Heart right ventricle (tissue), 16 donors: ENCODE measurements at regions of chr2 and their contacts with region 1.

Region 1: DNA sequence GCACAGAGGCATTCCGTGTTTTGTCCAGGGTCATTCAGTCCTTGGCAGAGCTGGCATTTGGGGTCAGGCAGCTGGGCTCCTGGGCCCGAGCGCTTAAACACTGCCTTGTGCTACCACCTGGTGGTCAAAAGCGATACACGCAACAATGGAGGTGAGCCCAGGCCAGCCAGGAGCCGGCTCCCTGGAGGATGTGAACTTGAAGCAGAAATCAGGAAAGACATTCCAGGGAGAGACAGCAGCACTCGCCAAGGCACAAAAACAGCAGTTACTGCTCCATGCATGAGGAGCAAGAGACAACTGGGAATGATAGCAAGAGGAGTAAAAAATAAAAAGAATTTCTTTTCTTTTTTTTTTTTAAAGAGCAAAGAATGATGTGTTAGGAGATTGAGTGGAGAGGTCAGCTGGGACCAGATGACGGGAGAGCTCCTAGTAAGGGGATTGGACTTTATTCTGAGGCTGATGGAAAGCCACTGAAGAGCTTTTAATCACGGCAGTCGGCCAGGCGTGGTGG is 20.7 kb downstream of the SCYGR8 start:
- DNase-seq: peak; percentile 70 to 76
- ATAC-seq: peak; percentile 90 to 99 (median 96)
- H3K4me3 ChIP-seq: no peak overlapping the region
- H3K27ac ChIP-seq: peak overlapping the region in 6 of 10 donors; percentile 3 to 41 (median 22)
- H3K4me1 ChIP-seq: peaks cover 0 to 8% (median 5%) of the 10 kb centered on the region in 9 donors
- H3K27me3 ChIP-seq: no peaks in the 10 kb centered on the region
- CTCF ChIP-seq: peak; percentile 69 to 93 (median 87)

Region 2: GRCh38 chr2:227238238-227239237 is 527.9 kb before region 1 on chr2:
- intact Hi-C with region 1: loop called in 1 of 10 experiments (anchors 5 kb)
- DNase-seq: peak; percentile 63 to 76
- ATAC-seq: peak in 3 of 8 donors; percentile 58 to 75 (median 64)
- H3K4me3 ChIP-seq: no peak overlapping the region
- H3K27ac ChIP-seq: no peak overlapping the region
- H3K4me1 ChIP-seq: no peaks in the 10 kb centered on the region
- H3K27me3 ChIP-seq: no peaks in the 10 kb centered on the region
- CTCF ChIP-seq: peak; percentile 88 to 99 (median 96)

Region 3: DNA sequence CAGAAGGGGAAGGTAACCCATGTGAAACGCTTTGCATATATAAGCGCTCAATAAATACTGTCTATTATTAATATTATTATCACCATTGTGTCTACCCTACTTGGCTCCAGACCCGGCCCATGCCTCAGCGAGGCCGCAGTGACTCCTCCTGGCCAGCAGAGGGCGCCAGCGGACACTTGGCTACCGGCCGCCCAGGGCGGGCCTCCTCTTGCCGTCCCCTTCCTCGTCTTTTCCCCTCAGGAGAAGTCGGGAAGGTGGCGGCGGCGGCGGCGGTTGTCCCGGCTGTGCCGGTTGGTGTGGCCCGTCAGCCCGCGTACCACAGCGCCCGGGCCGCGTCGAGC is 294.5 kb before region 1 on chr2 and contains the start of gene AGFG1:
- intact Hi-C with region 1: loop called in 5 of 10 experiments (anchors 2 to 10 kb)
- DNase-seq: peak; percentile 82 to 87
- ATAC-seq: peak; percentile 81 to 96 (median 92)
- H3K4me3 ChIP-seq: peak within 1 kb of the TSS; percentile 82 to 99 (median 92)
- H3K27ac ChIP-seq: peak within 1 kb of the TSS; percentile 41 to 96 (median 86)
- H3K4me1 ChIP-seq: peaks cover 9 to 43% (median 29%) of the 10 kb centered on the region in 9 donors
- H3K27me3 ChIP-seq: no peaks in the 10 kb centered on the region
- CTCF ChIP-seq: peak; percentile 99 to 100 (median 99)
- total RNA-seq, gene AGFG1: 52.8 to 77.9 (median 59.0) TPM

Region 4: DNA sequence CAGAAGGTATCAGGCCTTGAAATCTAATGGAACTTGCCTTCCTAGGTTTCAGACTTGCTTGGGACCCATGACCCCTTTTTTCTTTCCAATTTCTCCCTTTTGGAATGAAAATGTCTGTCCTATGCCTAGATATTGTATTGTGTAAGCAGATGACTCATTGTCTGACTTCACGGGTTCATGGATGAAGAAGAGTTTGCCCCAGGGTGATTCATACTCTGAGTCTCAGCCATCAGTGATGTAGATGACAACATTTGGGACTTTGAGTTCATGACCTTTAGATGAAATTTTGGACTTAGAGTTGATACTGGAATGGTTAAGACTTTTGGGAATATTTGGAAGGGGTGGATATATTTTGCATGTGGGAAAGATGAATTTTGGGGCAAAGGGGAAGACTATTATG is 111.0 kb before region 1 on chr2:
- intact Hi-C with region 1: loop called (anchors 1 to 5 kb)
- DNase-seq: no peak
- ATAC-seq: peak in 4 of 8 donors; percentile 24 to 93 (median 65)
- H3K4me3 ChIP-seq: no peak overlapping the region
- H3K27ac ChIP-seq: peak overlapping the region in 1 of 10 donors; percentile 71
- H3K4me1 ChIP-seq: peaks cover 0 to 27% (median 0%) of the 10 kb centered on the region in 9 donors
- H3K27me3 ChIP-seq: peaks cover 0 to 4% (median 0%) of the 10 kb centered on the region in 7 donors
- CTCF ChIP-seq: no peak